CD8-positive, alpha-beta T cell (primary cell): ENCODE measurements at regions of chr17 and their contacts with region 1.

Region 1: DNA sequence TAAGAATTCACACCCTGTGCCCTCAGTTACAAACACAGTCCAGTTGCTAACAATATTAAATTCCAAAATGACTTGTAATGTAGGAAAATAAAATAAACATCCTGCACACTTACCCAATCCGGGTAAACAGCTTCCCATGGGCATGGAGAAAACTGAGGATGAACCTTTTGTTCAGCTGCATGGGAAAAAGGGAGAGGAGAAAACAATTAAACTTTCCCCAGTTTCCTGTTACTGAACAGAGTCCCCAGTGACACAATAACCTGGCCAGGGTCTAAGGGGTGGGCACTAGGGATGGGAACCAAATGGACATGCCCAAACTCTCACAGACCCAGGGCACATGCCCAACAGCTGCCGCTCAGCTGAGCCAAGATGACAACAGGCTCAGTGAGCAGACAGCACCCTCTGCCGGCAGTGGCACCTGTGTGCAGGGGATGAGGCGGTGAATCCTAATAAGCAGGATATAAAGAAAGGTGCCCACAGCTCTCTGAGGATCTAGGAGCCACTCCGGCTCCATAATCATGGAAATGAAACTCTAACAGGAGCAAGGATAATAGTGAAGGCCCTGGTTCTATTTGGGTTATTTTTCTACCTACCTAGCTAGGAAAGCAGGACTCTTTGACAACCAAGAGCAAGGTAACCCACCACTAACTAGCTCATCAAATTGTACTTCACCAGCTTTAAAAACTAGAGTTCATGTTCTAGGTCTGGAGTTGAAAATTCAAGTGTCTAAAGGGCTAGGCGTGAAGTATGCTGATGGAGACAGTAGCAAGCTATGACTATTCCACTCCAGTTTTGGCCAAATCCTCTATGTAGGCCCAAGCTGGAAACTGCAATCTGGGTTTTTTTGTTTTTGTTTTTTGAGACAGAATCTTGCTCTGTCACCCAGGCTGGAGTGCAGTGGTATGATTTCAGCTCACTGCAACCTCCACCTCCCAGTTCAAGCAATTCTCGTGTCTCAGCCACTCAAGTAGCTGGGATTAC is 58.8 kb downstream of the SMG6 start:
- DNase-seq: peak; percentile 72 to 90 (median 86)
- ATAC-seq: peak; percentile 91
- H3K4me3 ChIP-seq: no peak overlapping the region
- H3K4me3 Mint-ChIP-seq: no peak overlapping the region
- H3K27ac ChIP-seq: peak overlapping the region in 1 of 2 experiments; percentile 23
- H3K27ac Mint-ChIP-seq: peak overlapping the region; percentile 78
- H3K4me1 ChIP-seq: peaks cover 11% of the 10 kb centered on the region
- H3K4me1 Mint-ChIP-seq: peaks cover 32% of the 10 kb centered on the region
- H3K27me3 ChIP-seq: no peaks in the 10 kb centered on the region
- H3K27me3 Mint-ChIP-seq: no peaks in the 10 kb centered on the region
- CTCF ChIP-seq: peak; percentile 94

Region 2: GRCh38 chr17:1047177-1047878 is 1197.5 kb before region 1 on chr17:
- CTCF ChIA-PET with region 1: no interaction called
- POLR2A ChIA-PET with region 1: no interaction called
- intact Hi-C with region 1: no loop called
- DNase-seq: no peak
- ATAC-seq: no peak
- H3K4me3 ChIP-seq: no peak overlapping the region
- H3K4me3 Mint-ChIP-seq: no peak overlapping the region
- H3K27ac ChIP-seq: no peak overlapping the region
- H3K27ac Mint-ChIP-seq: no peak overlapping the region
- H3K4me1 ChIP-seq: no peaks in the 10 kb centered on the region
- H3K4me1 Mint-ChIP-seq: no peaks in the 10 kb centered on the region
- H3K27me3 ChIP-seq: no peaks in the 10 kb centered on the region
- H3K27me3 Mint-ChIP-seq: no peaks in the 10 kb centered on the region
- CTCF ChIP-seq: no peak

Region 3: GRCh38 chr17:1882836-1883235 is 362.0 kb before region 1 on chr17:
- CTCF ChIA-PET with region 1: interaction called, 3 read pairs
- POLR2A ChIA-PET with region 1: no interaction called
- intact Hi-C with region 1: loop called in 1 of 2 experiments (anchors 10 kb)
- DNase-seq: peak in 5 of 9 experiments; percentile 4 to 60 (median 41)
- ATAC-seq: peak; percentile 42
- H3K4me3 ChIP-seq: no peak overlapping the region
- H3K4me3 Mint-ChIP-seq: no peak overlapping the region
- H3K27ac ChIP-seq: no peak overlapping the region
- H3K27ac Mint-ChIP-seq: no peak overlapping the region
- H3K4me1 ChIP-seq: no peaks in the 10 kb centered on the region
- H3K4me1 Mint-ChIP-seq: no peaks in the 10 kb centered on the region
- H3K27me3 ChIP-seq: no peaks in the 10 kb centered on the region
- H3K27me3 Mint-ChIP-seq: no peaks in the 10 kb centered on the region
- CTCF ChIP-seq: peak; percentile 33

Region 4: GRCh38 chr17:2090804-2091534 is 153.9 kb before region 1 on chr17:
- CTCF ChIA-PET with region 1: interaction called, 11 read pairs
- POLR2A ChIA-PET with region 1: no interaction called
- intact Hi-C with region 1: no loop called
- DNase-seq: no peak
- ATAC-seq: no peak
- H3K4me3 ChIP-seq: no peak overlapping the region
- H3K4me3 Mint-ChIP-seq: peak overlapping the region; percentile 92
- H3K27ac ChIP-seq: no peak overlapping the region
- H3K27ac Mint-ChIP-seq: peak overlapping the region; percentile 93
- H3K4me1 ChIP-seq: peaks cover 36% of the 10 kb centered on the region
- H3K4me1 Mint-ChIP-seq: peaks cover 52% of the 10 kb centered on the region
- H3K27me3 ChIP-seq: no peaks in the 10 kb centered on the region
- H3K27me3 Mint-ChIP-seq: no peaks in the 10 kb centered on the region
- CTCF ChIP-seq: no peak

Region 5: DNA sequence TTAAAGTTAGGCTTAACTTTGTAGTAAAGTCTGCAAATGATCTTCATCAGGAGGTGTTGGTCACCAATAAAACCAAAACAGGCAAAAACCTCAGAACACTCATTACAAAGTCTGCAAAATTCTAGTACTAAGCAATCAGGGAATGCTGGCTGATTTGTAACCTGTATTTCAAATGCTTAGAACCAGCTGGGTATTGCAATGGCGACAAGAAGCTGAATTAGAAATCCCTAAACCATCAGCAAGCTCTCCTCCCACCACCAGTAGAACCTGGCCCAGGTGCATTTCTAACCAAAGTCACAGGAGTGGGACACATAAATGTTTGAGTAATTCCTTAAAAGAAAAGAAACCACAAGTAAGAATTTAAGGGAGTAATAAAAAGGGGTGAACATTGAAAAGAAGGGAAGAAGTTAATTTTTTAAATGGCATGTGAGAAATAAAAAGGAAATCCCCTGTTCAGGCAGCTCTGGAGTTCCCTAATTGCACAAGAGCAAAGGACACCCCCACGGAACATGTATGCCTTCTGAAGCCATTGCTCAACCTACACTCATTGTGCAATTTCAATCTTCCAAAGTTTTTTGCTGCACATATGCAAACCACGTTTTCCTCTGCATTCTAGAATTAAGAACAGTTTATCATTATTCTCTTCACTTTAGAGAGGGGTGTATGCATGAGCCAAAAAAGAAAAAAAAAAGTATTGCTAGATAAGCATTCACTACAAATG is 87.0 kb before region 1 on chr17:
- CTCF ChIA-PET with region 1: interaction called, 14 read pairs
- POLR2A ChIA-PET with region 1: no interaction called
- intact Hi-C with region 1: no loop called
- DNase-seq: peak in 1 of 9 experiments; percentile 40
- ATAC-seq: no peak
- H3K4me3 ChIP-seq: no peak overlapping the region
- H3K4me3 Mint-ChIP-seq: no peak overlapping the region
- H3K27ac ChIP-seq: no peak overlapping the region
- H3K27ac Mint-ChIP-seq: no peak overlapping the region
- H3K4me1 ChIP-seq: no peaks in the 10 kb centered on the region
- H3K4me1 Mint-ChIP-seq: peaks cover 9% of the 10 kb centered on the region
- H3K27me3 ChIP-seq: no peaks in the 10 kb centered on the region
- H3K27me3 Mint-ChIP-seq: no peaks in the 10 kb centered on the region
- CTCF ChIP-seq: no peak

Region 6: GRCh38 chr17:2215616-2216364 is 29.0 kb before region 1 on chr17:
- CTCF ChIA-PET with region 1: interaction called, 14 read pairs
- POLR2A ChIA-PET with region 1: no interaction called
- intact Hi-C with region 1: no loop called
- DNase-seq: peak; percentile 44 to 90 (median 75)
- ATAC-seq: peak; percentile 94
- H3K4me3 ChIP-seq: peak overlapping the region; percentile 30 to 42
- H3K4me3 Mint-ChIP-seq: peak overlapping the region; percentile 69
- H3K27ac ChIP-seq: peak overlapping the region; percentile 71 to 89
- H3K27ac Mint-ChIP-seq: peak overlapping the region; percentile 94
- H3K4me1 ChIP-seq: peaks cover 50% of the 10 kb centered on the region
- H3K4me1 Mint-ChIP-seq: peaks cover 61% of the 10 kb centered on the region
- H3K27me3 ChIP-seq: no peaks in the 10 kb centered on the region
- H3K27me3 Mint-ChIP-seq: no peaks in the 10 kb centered on the region
- CTCF ChIP-seq: no peak

Region 7: DNA sequence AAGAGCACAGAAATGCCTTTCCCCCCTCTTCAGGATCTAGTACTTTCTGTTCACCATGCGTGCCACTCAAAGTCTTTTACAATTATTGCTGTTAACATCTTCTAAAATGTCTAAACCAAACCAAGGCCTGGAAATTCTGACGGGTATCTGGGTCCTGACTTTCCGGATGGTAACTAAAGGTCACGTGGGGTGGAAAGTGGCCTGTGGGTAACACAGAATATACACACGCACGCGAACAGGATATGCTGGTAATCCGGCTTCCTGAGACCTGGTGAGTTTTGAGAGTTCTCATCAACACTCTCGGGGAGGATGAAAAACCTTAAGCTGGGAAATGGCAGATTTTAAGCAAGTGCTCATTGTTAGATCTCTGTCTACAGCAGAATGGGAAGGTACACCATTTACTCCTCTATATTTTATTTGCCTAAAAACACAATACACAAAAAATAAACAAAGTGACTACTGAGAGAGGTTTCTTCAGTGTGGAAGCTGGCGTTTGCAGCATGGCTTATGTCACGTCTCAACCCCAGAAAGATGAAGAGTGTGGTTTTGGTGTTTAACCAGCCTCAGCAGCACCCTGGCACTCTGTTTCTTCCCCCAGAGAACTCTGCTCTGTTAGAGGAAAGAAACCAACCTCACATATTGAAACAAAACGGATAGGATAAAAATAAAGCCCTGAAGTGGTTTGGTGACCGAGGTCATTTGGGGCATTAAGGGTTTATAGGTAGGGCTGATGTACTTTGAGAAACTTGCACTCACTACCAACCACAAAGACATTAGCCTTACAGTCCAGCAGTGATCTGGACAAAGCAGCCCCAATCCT is 21.4 kb after region 1 on chr17:
- CTCF ChIA-PET with region 1: interaction called, 124 read pairs
- POLR2A ChIA-PET with region 1: interaction called, 8 read pairs
- intact Hi-C with region 1: loop called (anchors 1 kb)
- DNase-seq: peak; percentile 58 to 97 (median 84)
- ATAC-seq: peak; percentile 79
- H3K4me3 ChIP-seq: peak overlapping the region; percentile 34 to 51
- H3K4me3 Mint-ChIP-seq: peak overlapping the region; percentile 58
- H3K27ac ChIP-seq: peak overlapping the region; percentile 88 to 95
- H3K27ac Mint-ChIP-seq: peak overlapping the region; percentile 96
- H3K4me1 ChIP-seq: peaks cover 86% of the 10 kb centered on the region
- H3K4me1 Mint-ChIP-seq: peaks cover 83% of the 10 kb centered on the region
- H3K27me3 ChIP-seq: no peaks in the 10 kb centered on the region
- H3K27me3 Mint-ChIP-seq: no peaks in the 10 kb centered on the region
- CTCF ChIP-seq: no peak

Region 8: DNA sequence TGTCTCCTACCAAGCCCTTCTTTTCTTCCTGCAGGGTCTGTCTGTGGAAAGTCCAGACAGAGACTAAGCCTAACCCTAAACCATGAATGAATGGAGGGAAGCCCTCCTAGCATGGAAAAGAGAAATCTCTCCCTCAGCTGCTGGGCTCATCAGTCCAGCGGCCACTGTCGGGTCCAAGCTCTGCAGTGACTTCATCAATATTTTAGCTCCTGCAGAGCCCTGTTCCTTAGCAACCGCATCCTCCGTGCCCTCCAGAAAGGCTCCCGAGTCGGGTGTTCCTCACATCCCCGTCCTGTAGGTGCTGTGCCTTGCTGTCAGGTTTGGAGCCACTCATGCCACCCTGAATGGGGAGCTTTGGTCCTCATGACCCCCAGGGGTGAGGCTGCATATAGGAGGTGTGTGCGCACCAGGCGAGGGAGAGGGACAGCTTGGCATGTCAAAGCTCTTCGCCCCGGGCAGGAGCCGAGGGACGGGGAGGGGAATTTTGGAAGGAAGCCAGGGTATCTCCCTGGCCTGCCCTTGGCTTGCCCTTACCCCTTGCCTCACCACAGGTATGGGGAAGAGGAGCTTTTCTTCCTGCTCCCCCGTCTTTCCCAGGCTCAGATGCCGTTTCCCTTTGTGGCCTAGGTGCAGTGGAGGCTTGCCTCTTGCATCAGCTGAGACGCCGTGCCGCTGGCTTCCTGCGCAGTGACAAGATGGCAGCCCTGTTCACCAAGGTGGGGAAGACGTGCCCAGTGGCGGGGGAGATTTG is 116.3 kb after region 1 on chr17:
- CTCF ChIA-PET with region 1: no interaction called
- POLR2A ChIA-PET with region 1: no interaction called
- intact Hi-C with region 1: no loop called
- DNase-seq: no peak
- ATAC-seq: no peak
- H3K4me3 ChIP-seq: no peak overlapping the region
- H3K4me3 Mint-ChIP-seq: no peak overlapping the region
- H3K27ac ChIP-seq: no peak overlapping the region
- H3K27ac Mint-ChIP-seq: no peak overlapping the region
- H3K4me1 ChIP-seq: no peaks in the 10 kb centered on the region
- H3K4me1 Mint-ChIP-seq: no peaks in the 10 kb centered on the region
- H3K27me3 ChIP-seq: no peaks in the 10 kb centered on the region
- H3K27me3 Mint-ChIP-seq: no peaks in the 10 kb centered on the region
- CTCF ChIP-seq: no peak